A673 (cell line): ENCODE measurements at regions of chr2 and their contacts with region 1.

Region 1: DNA sequence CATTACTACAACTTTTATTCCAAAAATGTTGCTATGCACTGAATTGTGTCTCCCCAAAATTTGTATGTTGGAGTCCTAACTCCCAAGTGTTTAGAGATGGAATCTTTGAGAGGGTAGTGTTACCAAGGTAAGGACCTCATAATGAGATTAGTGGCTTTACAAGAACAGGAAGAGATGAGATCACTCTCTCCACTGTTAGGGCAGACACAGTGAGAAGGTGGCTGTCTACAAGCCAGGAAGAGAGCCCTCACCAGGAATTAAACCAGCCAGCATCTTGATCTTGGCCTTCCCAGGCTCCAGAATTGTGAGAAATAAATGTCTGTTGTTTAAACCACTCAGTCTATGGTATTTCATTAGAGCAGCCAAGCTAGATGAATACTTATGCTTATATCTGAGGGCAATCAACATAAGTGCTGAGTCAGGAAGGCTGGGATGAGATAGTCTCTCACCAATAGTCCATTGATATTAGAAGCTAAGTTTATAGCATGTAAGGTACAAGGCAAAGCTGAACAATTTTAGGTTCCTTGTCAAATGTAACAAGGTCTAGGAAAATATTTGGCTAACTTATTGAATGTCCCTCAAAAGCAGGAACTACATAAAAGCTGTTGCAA is 317.6 kb upstream of the REG3G start:
- DNase-seq: peak; percentile 83
- H3K4me3 ChIP-seq: no peak overlapping the region
- H3K27ac ChIP-seq: peak overlapping the region; percentile 88
- H3K4me1 ChIP-seq: no peaks in the 10 kb centered on the region
- H3K27me3 ChIP-seq: no peaks in the 10 kb centered on the region
- CTCF ChIP-seq: no peak

Region 2: GRCh38 chr2:78147466-78147865 is 560.4 kb before region 1 on chr2:
- CTCF ChIA-PET with region 1: no interaction called
- POLR2A ChIA-PET with region 1: no interaction called
- intact Hi-C with region 1: no loop called
- DNase-seq: no peak
- H3K4me3 ChIP-seq: no peak overlapping the region
- H3K27ac ChIP-seq: no peak overlapping the region
- H3K4me1 ChIP-seq: no peaks in the 10 kb centered on the region
- H3K27me3 ChIP-seq: no peaks in the 10 kb centered on the region
- CTCF ChIP-seq: no peak

Region 3: GRCh38 chr2:78351208-78351607 is 356.7 kb before region 1 on chr2:
- CTCF ChIA-PET with region 1: no interaction called
- POLR2A ChIA-PET with region 1: no interaction called
- intact Hi-C with region 1: loop called (anchors 5 kb)
- DNase-seq: peak; percentile 53
- H3K4me3 ChIP-seq: no peak overlapping the region
- H3K27ac ChIP-seq: no peak overlapping the region
- H3K4me1 ChIP-seq: peaks cover 20% of the 10 kb centered on the region
- H3K27me3 ChIP-seq: no peaks in the 10 kb centered on the region
- CTCF ChIP-seq: peak; percentile 62

Region 4: DNA sequence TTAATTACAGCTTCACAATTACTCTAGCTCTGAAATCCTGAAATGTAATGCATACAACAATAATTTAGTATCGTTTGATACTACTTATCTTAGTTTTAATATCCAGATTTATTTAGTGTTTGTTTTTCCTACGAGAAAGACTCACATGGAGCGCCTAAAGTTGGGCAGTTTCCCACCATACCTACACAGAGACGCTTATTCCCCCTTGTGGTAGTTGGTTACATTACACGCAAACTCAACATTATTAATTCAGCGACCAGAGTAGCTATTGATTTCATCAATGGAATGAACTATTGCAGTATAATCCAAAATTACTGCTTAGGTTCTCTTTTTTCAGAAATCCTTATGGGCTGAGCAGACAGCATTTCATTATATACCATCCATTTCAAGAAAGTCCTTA is 153.7 kb after region 1 on chr2:
- CTCF ChIA-PET with region 1: no interaction called
- POLR2A ChIA-PET with region 1: no interaction called
- intact Hi-C with region 1: loop called (anchors 2 kb)
- DNase-seq: peak; percentile 68
- H3K4me3 ChIP-seq: no peak overlapping the region
- H3K27ac ChIP-seq: no peak overlapping the region
- H3K4me1 ChIP-seq: no peaks in the 10 kb centered on the region
- H3K27me3 ChIP-seq: no peaks in the 10 kb centered on the region
- CTCF ChIP-seq: peak; percentile 62

Region 5: GRCh38 chr2:79554899-79555298 is 847.0 kb after region 1 on chr2:
- CTCF ChIA-PET with region 1: no interaction called
- POLR2A ChIA-PET with region 1: no interaction called
- intact Hi-C with region 1: no loop called
- DNase-seq: no peak
- H3K4me3 ChIP-seq: no peak overlapping the region
- H3K27ac ChIP-seq: no peak overlapping the region
- H3K4me1 ChIP-seq: no peaks in the 10 kb centered on the region
- H3K27me3 ChIP-seq: no peaks in the 10 kb centered on the region
- CTCF ChIP-seq: no peak